HepG2 (cell line): ENCODE measurements at regions of chr4 and their contacts with region 1.

Region 1: DNA sequence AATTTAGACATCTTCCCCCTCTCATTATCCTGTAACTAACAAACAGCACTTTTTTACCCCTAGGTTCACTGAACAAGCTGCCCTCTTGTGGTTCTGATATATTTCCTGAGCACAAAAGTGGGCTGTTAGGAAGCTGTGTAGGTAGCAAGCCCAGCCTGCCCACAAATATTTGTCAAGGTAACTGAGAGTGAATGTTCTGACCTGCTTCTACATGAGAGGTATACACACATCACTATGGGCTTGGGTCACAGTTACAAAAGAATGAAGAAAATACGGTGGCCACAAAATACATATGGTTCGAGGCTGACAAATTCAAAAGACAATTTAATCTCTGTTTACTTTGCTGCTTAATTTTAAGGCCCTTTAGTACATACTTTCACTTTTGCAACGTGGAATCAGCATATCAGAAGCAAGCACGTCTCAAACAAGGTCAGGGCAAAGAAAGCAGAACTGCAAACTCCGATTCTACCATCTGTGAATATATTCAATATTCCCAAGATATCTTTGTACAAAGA is 78.7 kb downstream of the RBM47 start:
- DNase-seq: peak; percentile 54
- ATAC-seq: peak; percentile 78
- H3K4me3 ChIP-seq: peak overlapping the region in 2 of 3 experiments; percentile 0 to 28; a peak in 1 of 6 replicates
- H3K27ac ChIP-seq: no peak overlapping the region
- H3K4me1 ChIP-seq: peaks cover 31% of the 10 kb centered on the region
- H3K27me3 ChIP-seq: no peaks in the 10 kb centered on the region; a peak in 1 of 5 replicates
- CTCF ChIP-seq: peak; percentile 70
- EP300 ChIP-seq: no peak
- POLR2A ChIP-seq: no peak
- RAD21 ChIP-seq: no peak

Region 2: GRCh38 chr4:40502934-40503333 is 48.1 kb before region 1 on chr4:
- CTCF ChIA-PET with region 1: no interaction called
- POLR2A ChIA-PET with region 1: no interaction called
- in situ Hi-C with region 1: no loop called
- intact Hi-C with region 1: no loop called
- DNase-seq: no peak
- ATAC-seq: no peak
- H3K4me3 ChIP-seq: no peak overlapping the region
- H3K27ac ChIP-seq: no peak overlapping the region
- H3K4me1 ChIP-seq: peaks cover 13% of the 10 kb centered on the region
- H3K27me3 ChIP-seq: no peaks in the 10 kb centered on the region
- CTCF ChIP-seq: no peak
- EP300 ChIP-seq: no peak
- POLR2A ChIP-seq: no peak
- RAD21 ChIP-seq: no peak

Region 3: GRCh38 chr4:40719008-40719623 is 168.1 kb after region 1 on chr4:
- CTCF ChIA-PET with region 1: no interaction called
- POLR2A ChIA-PET with region 1: no interaction called
- in situ Hi-C with region 1: no loop called
- intact Hi-C with region 1: loop called (anchors 1 kb)
- DNase-seq: peak; percentile 44
- ATAC-seq: peak; percentile 88
- H3K4me3 ChIP-seq: no peak overlapping the region
- H3K27ac ChIP-seq: no peak overlapping the region
- H3K4me1 ChIP-seq: no peaks in the 10 kb centered on the region
- H3K27me3 ChIP-seq: no peaks in the 10 kb centered on the region; a peak in 1 of 5 replicates
- CTCF ChIP-seq: peak; percentile 79
- EP300 ChIP-seq: no peak
- POLR2A ChIP-seq: no peak
- RAD21 ChIP-seq: peak; percentile 56